CD8-positive, alpha-beta T cell (primary cell): ENCODE measurements at regions of chr6 and their contacts with region 1.

Region 1: DNA sequence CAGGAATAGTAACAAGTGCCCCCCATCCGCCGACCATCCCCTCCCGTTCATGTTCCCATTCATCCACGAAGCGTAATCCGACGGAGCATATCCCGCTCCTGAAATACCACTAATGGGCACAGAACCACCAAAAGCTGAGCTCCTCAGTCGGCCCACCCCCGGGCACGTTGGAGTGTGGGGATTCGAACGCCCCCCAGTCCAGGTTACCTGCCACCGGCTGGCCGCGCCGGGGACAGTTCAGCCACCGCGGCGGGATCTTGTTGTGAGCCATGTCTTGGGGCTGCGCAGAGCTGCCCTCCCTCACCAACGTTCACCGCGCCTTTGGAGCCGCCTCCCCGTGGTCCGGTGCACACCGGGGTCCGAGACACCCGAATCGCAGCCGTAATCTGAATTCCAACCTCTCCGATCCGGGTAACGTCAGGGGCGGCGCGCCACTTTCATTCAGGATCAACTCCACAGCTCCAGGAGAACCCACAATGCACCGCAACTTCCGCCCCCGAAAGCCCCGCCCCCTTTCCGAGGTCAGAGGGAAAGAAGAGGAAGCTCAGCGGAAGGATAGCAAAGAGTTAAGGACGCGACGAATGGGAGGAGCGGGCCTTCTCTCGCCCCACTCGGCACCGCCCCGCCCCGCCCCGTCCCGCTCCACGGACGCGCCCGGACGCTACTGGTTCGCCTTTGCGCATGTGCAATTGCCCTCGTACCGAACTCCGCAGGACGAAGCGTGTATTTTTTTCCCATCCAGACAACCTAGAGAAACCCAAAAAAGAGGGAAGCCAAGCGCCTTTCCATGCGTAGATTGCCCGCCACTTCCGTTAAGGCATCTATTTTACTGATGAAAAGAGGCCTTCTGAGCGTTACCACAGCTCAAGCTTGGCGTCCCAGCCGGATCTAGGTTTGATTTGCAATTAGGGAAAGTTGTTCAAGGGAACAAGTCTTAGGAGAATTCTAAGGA is at the start of gene RNGTT:
- DNase-seq: peak; percentile 95 to 98 (median 98)
- ATAC-seq: peak; percentile 99
- H3K4me3 ChIP-seq: peak within 1 kb of the TSS; percentile 90 to 92
- H3K4me3 Mint-ChIP-seq: peak within 1 kb of the TSS; percentile 98
- H3K27ac ChIP-seq: peak within 1 kb of the TSS; percentile 58 to 73
- H3K27ac Mint-ChIP-seq: peak within 1 kb of the TSS; percentile 94
- H3K4me1 ChIP-seq: peaks cover 20% of the 10 kb centered on the region
- H3K4me1 Mint-ChIP-seq: peaks cover 51% of the 10 kb centered on the region
- H3K27me3 ChIP-seq: no peaks in the 10 kb centered on the region
- H3K27me3 Mint-ChIP-seq: no peaks in the 10 kb centered on the region
- CTCF ChIP-seq: no peak
- total RNA-seq, gene RNGTT: 10.1 to 10.3 TPM

Region 2: DNA sequence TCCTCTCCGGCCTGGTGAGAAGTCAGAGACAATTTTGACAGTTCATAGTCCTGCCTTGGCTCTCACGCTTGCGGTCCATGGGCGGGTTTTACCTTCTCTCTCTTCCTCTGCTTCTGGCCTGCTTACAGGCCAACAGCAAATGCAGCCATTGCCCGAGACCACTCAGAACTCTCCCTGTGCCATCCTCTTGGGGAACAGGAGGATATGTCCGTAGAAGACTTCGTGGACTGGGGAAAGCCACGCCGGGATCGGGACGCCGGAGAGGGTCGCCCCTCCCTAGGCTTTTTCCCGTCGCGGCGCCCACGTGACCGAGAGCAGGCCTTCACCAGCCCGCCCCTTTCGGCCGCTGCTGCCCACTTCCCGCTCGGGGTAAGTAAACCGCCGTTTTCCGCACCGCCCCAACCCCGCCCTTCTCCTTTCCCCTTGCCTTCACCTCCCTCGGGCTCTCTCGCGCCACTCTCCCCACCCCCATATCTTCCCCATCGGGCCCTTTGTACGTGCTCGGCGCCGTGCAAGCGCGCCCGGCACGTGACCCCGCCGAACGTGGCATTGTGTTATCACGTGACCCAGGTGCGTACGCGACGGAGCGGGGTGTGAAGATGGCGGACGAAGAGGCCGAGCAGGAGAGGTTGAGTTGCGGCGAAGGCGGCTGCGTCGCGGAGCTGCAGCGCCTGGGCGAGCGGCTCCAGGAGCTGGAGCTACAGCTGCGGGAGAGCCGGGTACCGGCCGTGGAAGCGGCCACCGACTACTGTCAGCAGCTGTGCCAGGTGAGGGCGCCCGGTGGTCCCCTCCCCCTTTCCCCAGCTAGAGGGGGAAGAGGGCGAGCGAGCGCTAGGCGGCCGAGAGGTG is 1808.2 kb before region 1 on chr6 and contains the start of gene ZNF292:
- CTCF ChIA-PET with region 1: no interaction called
- POLR2A ChIA-PET with region 1: interaction called, 3 read pairs
- intact Hi-C with region 1: loop called (anchors 5 kb)
- DNase-seq: peak; percentile 85 to 98 (median 95)
- ATAC-seq: peak; percentile 67
- H3K4me3 ChIP-seq: peak within 1 kb of the TSS; percentile 73 to 80
- H3K4me3 Mint-ChIP-seq: peak within 1 kb of the TSS; percentile 96
- H3K27ac ChIP-seq: peak within 1 kb of the TSS; percentile 85 to 95
- H3K27ac Mint-ChIP-seq: peak within 1 kb of the TSS; percentile 98
- H3K4me1 ChIP-seq: peaks cover 54% of the 10 kb centered on the region
- H3K4me1 Mint-ChIP-seq: peaks cover 58% of the 10 kb centered on the region
- H3K27me3 ChIP-seq: no peaks in the 10 kb centered on the region
- H3K27me3 Mint-ChIP-seq: no peaks in the 10 kb centered on the region
- CTCF ChIP-seq: no peak
- total RNA-seq, gene ZNF292: 82.6 to 87.6 TPM

Region 3: DNA sequence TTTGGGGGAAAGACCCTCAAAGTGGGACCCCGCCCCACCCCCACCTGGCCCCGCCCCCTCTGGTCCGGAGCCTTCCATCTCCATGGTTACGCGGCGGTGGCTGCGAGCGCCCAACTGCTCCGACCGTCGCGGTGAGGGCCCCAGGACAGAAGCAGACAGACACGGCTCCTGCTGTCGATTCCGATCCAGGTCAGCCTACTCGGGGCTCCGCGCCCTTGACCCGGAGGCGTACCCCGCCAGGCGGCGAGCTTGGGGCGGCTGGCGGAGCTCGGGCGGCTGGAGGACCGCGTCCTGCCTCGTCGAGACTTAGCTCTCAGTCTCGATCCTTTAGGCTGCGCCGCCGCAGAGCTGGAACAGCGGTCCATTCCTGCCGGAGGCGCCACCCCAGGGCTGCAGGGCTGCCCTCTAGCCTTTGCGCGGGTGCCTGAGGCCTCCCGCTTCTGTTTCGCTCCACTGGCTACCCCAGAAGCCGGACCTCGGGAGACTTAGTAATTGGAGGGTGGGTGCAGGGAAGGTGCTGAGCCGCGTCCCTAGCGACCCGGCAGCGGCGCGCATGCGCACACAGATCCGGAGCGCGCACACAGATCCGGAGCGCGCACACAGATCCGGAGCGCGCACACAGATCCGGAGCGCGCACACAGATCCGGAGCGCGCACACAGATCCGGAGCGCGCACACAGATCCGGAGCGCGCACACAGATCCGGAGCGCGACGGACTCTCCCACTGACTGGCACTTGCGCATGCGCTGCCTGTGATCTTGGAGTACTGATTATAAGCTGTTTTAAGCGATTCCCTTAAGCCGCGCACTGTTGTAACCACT is 1555.3 kb before region 1 on chr6 and contains the start of gene CFAP206:
- CTCF ChIA-PET with region 1: no interaction called
- POLR2A ChIA-PET with region 1: no interaction called
- intact Hi-C with region 1: loop called in 1 of 2 experiments (anchors 5 kb)
- DNase-seq: peak; percentile 50 to 90 (median 77)
- ATAC-seq: peak; percentile 77
- H3K4me3 ChIP-seq: peak within 1 kb of the TSS; percentile 65 to 91
- H3K4me3 Mint-ChIP-seq: peak within 1 kb of the TSS; percentile 87
- H3K27ac ChIP-seq: peak within 1 kb of the TSS; percentile 64 to 71
- H3K27ac Mint-ChIP-seq: peak within 1 kb of the TSS; percentile 57
- H3K4me1 ChIP-seq: peaks cover 10% of the 10 kb centered on the region
- H3K4me1 Mint-ChIP-seq: peaks cover 7% of the 10 kb centered on the region
- H3K27me3 ChIP-seq: peaks cover 3 to 5% of the 10 kb centered on the region in 2 experiments
- H3K27me3 Mint-ChIP-seq: peaks cover 17% of the 10 kb centered on the region
- CTCF ChIP-seq: no peak
- total RNA-seq, gene CFAP206: not detected

Region 4: DNA sequence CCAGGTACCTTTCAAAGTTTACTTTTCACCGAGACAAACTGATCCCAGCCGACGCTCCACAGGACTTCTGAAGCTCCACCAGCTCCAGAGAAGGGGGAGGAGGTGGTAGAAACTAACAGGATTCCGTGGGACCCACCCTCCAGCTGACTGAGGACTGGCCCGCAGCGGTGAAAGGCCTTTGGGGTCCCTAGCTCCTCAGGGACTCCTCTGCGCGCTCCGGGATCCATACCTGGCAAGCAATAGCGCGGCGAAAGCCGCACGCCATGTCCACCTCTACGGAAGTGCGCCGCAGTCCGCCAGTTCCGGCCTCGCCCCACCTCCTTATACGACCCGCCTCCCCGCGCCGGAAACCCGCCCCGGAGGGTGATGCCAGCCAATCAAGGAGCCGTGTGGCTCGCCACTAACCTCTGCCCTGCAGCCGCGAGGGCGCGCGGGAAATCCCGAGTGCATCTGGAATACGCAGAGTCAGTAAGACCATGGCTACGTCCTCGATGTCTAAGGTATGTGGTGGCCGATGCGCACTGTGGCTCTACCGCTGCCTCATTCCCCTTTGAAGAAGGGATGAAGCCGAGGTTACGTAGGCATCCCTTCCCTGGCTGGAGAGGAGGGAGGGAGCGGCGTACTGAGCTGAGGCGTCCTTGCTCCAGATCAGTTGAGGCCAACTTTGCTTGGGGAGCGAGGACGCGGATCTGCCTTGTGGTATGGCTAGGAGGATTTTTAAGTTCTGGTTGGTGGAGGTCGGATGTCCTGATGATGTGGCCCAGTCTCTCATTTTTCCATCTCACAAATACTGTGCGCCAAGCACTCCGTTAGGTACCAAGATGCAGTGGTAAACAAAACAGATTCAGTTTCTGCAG is 1373.5 kb before region 1 on chr6 and contains the starts of genes ORC3 and RARS2:
- CTCF ChIA-PET with region 1: no interaction called
- POLR2A ChIA-PET with region 1: interaction called, 4 read pairs
- intact Hi-C with region 1: loop called in 1 of 2 experiments (anchors 2 kb)
- DNase-seq: peak; percentile 85 to 96 (median 93)
- ATAC-seq: peak; percentile 98
- H3K4me3 ChIP-seq: peak within 1 kb of the TSS; percentile 69 to 89
- H3K4me3 Mint-ChIP-seq: peak within 1 kb of the TSS; percentile 93
- H3K27ac ChIP-seq: peak within 1 kb of the TSS; percentile 60 to 78
- H3K27ac Mint-ChIP-seq: peak within 1 kb of the TSS; percentile 92
- H3K4me1 ChIP-seq: peaks cover 35% of the 10 kb centered on the region
- H3K4me1 Mint-ChIP-seq: peaks cover 64% of the 10 kb centered on the region
- H3K27me3 ChIP-seq: no peaks in the 10 kb centered on the region
- H3K27me3 Mint-ChIP-seq: no peaks in the 10 kb centered on the region
- CTCF ChIP-seq: no peak
- total RNA-seq, gene ORC3: 9.4 to 9.9 TPM
- total RNA-seq, gene RARS2: 15.8 to 20.4 TPM

Region 5: DNA sequence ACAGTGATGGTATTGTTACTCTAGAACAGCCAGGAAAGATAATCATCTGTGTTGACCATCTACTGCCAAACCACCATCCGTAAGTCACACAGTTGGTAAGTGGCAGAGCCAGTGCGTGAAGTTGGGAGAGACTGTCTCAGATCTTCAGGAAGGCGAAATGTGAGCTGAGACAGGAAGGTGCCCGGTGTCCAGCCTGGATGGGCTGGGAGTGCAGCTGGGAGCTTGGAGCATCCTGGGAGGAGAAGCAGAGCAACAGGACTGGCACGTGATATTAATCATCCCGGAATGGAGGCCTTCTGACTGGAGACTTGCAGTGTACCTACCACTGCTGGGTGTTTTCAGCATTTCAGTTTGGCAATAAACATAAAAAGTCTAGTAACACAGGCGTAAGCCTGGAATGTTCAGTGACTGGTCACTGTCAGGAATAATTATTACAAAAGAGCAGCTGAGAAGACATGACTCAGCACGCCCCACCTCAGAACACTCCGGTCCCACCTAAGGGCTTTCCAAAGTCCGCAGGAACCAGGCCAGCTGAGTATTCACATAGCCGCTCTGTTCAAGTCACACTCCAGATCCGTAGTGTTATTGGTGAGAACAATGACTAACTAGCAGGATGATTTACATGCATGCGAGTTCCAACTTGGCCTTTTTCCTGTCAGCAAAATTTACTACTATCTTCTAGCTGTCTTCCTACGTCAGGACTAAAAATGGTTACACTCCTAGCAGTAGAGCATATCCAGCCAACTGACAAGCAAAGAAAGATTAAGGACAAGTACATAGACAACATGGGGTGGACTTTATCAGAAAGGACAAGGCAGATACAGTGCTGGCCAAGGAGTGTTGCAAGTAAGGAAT is 72.1 kb after region 1 on chr6:
- CTCF ChIA-PET with region 1: no interaction called
- POLR2A ChIA-PET with region 1: no interaction called
- intact Hi-C with region 1: no loop called
- DNase-seq: peak in 1 of 9 experiments; percentile 35
- ATAC-seq: no peak
- H3K4me3 ChIP-seq: no peak overlapping the region
- H3K4me3 Mint-ChIP-seq: no peak overlapping the region
- H3K27ac ChIP-seq: no peak overlapping the region
- H3K27ac Mint-ChIP-seq: no peak overlapping the region
- H3K4me1 ChIP-seq: no peaks in the 10 kb centered on the region
- H3K4me1 Mint-ChIP-seq: no peaks in the 10 kb centered on the region
- H3K27me3 ChIP-seq: no peaks in the 10 kb centered on the region
- H3K27me3 Mint-ChIP-seq: no peaks in the 10 kb centered on the region
- CTCF ChIP-seq: no peak

Region 6: GRCh38 chr6:89352278-89353117 is 389.1 kb after region 1 on chr6 and contains the start of gene UBE2J1:
- CTCF ChIA-PET with region 1: no interaction called
- POLR2A ChIA-PET with region 1: interaction called, 7 read pairs
- intact Hi-C with region 1: loop called in 1 of 2 experiments (anchors 5 kb)
- DNase-seq: peak; percentile 48 to 87 (median 71)
- ATAC-seq: peak; percentile 81
- H3K4me3 ChIP-seq: peak within 1 kb of the TSS; percentile 58 to 67
- H3K4me3 Mint-ChIP-seq: peak within 1 kb of the TSS; percentile 97
- H3K27ac ChIP-seq: peak within 1 kb of the TSS; percentile 74 to 77
- H3K27ac Mint-ChIP-seq: peak within 1 kb of the TSS; percentile 97
- H3K4me1 ChIP-seq: peaks cover 42% of the 10 kb centered on the region
- H3K4me1 Mint-ChIP-seq: peaks cover 69% of the 10 kb centered on the region
- H3K27me3 ChIP-seq: no peaks in the 10 kb centered on the region
- H3K27me3 Mint-ChIP-seq: no peaks in the 10 kb centered on the region
- CTCF ChIP-seq: no peak
- total RNA-seq, gene UBE2J1: 34.1 to 37.5 TPM

Region 7: GRCh38 chr6:89829591-89830385 is 866.4 kb after region 1 on chr6 and contains the start of gene CASP8AP2:
- CTCF ChIA-PET with region 1: no interaction called
- POLR2A ChIA-PET with region 1: no interaction called
- intact Hi-C with region 1: loop called (anchors 5 kb)
- DNase-seq: peak; percentile 88 to 99 (median 93)
- ATAC-seq: peak; percentile 94
- H3K4me3 ChIP-seq: peak within 1 kb of the TSS; percentile 82 to 95
- H3K4me3 Mint-ChIP-seq: peak within 1 kb of the TSS; percentile 99
- H3K27ac ChIP-seq: peak within 1 kb of the TSS; percentile 71 to 84
- H3K27ac Mint-ChIP-seq: peak within 1 kb of the TSS; percentile 97
- H3K4me1 ChIP-seq: peaks cover 14% of the 10 kb centered on the region
- H3K4me1 Mint-ChIP-seq: peaks cover 35% of the 10 kb centered on the region
- H3K27me3 ChIP-seq: no peaks in the 10 kb centered on the region
- H3K27me3 Mint-ChIP-seq: no peaks in the 10 kb centered on the region
- CTCF ChIP-seq: no peak
- total RNA-seq, gene CASP8AP2: 13.1 to 14.8 TPM